ENCODE measurements at regions of chr22 and their contacts with region 1.

Region 1: DNA sequence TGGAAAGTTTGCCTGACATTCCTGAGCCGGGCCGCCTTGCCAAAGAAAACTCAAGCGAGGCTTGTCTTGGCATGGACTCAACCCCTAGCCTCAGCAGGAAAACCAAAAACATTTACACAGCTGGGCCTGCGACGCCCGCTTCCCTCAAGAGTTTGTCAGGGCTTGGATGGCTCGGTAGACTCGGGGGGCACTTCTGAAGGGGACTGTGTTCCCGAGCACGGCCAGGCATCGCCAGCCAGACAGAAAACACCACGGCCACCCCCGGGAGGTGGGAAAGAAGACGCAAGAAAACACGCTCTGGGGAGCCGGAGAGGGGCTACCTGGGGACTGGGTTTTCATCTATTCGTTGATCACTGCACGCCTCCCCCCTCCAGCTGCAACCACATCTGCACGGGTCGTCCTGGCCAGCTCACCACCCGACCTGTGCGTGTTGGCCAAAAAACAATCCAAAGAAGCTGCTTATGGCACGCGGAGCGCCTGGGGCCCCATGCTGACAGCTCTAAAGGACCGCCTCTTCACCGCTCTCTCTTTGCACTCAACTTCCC is 380.7 kb downstream of the MN1 start:
- DNase-seq: peak; percentile 86 to 93
- H3K4me3 ChIP-seq: peak overlapping the region in 2 of 3 donors; percentile 13 to 48
- H3K27ac ChIP-seq: peak overlapping the region; percentile 80 to 82
- H3K4me1 ChIP-seq: peaks cover 8 to 14% of the 10 kb centered on the region in 2 donors
- H3K27me3 ChIP-seq: no peaks in the 10 kb centered on the region
- CTCF ChIP-seq: no peak
- POLR2A ChIP-seq: no peak

Region 2: GRCh38 chr22:28923826-28924732 is 1503.2 kb after region 1 on chr22:
- intact Hi-C with region 1: loop called (anchors 5 kb)
- DNase-seq: peak; percentile 60 to 75
- H3K4me3 ChIP-seq: peak overlapping the region in 2 of 3 donors; percentile 12 to 19
- H3K27ac ChIP-seq: peak overlapping the region; percentile 22 to 63
- H3K4me1 ChIP-seq: no peaks in the 10 kb centered on the region
- H3K27me3 ChIP-seq: no peaks in the 10 kb centered on the region
- CTCF ChIP-seq: no peak
- POLR2A ChIP-seq: no peak